Colonic mucosa (tissue), 4 donors: ENCODE measurements at regions of chr12 and their contacts with region 1.

Region 1: GRCh38 chr12:11581179-11581755 is 68.2 kb upstream of the ETV6 start:
- DNase-seq: peak; percentile 84
- H3K4me3 ChIP-seq: no peak overlapping the region
- H3K27ac ChIP-seq: no peak overlapping the region
- H3K4me1 ChIP-seq: no peaks in the 10 kb centered on the region
- H3K27me3 ChIP-seq: no peaks in the 10 kb centered on the region
- CTCF ChIP-seq: peak; percentile 54

Region 2: DNA sequence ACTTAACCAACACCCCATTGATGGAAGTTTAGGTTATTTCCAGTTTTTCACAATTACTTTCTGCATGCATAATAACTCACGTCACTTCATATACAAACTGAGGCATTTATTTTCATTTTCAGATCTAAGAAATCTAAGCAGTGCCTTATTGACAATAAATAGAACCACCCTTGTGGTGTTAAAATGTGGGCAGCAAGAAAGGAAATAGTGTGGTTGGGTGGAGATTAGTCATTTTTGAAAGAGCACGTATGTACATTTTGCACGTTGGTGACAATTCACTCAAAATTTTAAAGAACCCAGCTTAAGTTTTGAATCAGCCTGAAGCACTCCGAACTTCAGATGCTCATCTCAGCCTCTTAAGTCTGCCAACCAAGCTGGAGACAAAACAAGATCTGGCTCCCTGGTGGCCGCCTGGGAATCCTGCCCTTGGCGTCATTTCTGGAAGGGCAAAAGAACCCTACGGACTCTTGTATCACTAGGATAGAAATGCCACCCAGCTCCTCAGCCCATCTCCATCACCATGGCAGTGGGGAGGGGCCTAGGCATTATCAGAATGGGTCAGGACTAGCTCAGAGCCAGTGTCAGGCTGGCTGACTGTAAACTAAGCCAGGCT is 400.0 kb after region 1 on chr12:
- intact Hi-C with region 1: no loop called
- DNase-seq: no peak
- H3K4me3 ChIP-seq: no peak overlapping the region
- H3K27ac ChIP-seq: no peak overlapping the region
- H3K4me1 ChIP-seq: no peaks in the 10 kb centered on the region
- H3K27me3 ChIP-seq: no peaks in the 10 kb centered on the region
- CTCF ChIP-seq: no peak

Region 3: DNA sequence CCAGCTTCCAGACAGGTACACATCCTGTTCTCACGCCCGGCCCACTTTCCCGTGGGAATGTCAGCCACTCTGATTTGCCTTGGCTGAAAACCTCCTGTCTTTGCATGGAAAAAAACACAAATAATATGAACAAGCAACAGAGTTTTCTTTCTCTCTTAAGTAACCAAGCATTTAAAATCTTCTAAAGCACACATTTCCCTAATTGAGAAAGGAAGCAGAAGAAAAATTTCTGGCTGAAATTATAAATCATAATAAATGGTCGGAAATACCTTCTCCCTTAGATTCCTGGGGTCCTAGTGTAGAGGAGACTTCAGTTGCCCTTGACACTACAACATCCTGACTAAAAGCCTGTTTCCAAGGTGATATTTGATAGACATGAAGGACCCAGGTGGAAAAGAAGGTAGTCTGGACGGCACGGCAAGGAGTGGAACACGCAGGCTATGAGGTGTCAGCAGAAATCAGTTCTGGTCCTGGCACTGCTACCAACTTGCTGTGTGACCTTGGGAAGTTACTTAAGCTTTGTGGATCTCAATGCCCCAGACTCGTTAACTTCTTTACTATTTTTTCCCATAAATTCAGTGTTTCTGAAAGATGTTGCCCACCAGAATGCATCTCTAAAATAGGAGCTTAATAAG is 452.4 kb after region 1 on chr12:
- intact Hi-C with region 1: loop called (anchors 2 kb)
- DNase-seq: no peak
- H3K4me3 ChIP-seq: no peak overlapping the region
- H3K27ac ChIP-seq: no peak overlapping the region
- H3K4me1 ChIP-seq: no peaks in the 10 kb centered on the region
- H3K27me3 ChIP-seq: no peaks in the 10 kb centered on the region
- CTCF ChIP-seq: no peak

Region 4: GRCh38 chr12:12334367-12335040 is 753.2 kb after region 1 on chr12:
- intact Hi-C with region 1: loop called (anchors 10 kb)
- DNase-seq: peak; percentile 68
- H3K4me3 ChIP-seq: no peak overlapping the region
- H3K27ac ChIP-seq: no peak overlapping the region
- H3K4me1 ChIP-seq: peaks cover 9% of the 10 kb centered on the region
- H3K27me3 ChIP-seq: no peaks in the 10 kb centered on the region
- CTCF ChIP-seq: peak; percentile 94

Region 5: DNA sequence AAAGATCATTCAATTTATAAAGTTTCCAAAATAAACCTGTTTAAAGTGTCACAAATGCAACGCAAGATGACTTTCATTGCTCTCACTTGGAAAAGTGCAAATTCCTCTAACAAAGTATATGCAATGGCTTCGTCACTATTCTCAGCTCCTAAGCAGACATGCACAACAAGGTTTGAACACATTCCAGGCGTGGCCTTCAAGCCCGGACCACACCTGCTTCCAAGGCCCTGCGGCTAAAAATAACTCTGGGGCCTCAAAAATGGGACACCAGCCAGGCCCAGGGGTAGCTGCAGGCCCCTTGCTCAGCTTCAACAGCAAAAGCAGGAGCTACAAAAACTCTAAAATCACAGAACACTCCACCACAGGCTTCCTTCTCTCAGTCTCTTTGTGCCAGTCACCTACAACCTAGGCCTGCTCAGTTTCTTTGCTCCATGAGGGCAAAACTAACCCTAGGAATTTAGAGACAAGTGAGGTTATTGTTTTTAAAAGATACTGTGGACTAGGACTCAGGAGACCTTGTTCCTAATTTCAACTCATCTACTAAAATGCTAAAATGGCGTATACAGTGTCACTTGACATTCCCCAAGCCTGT is 952.1 kb after region 1 on chr12:
- intact Hi-C with region 1: no loop called
- DNase-seq: peak; percentile 75
- H3K4me3 ChIP-seq: no peak overlapping the region
- H3K27ac ChIP-seq: peak overlapping the region; percentile 38
- H3K4me1 ChIP-seq: peaks cover 12% of the 10 kb centered on the region
- H3K27me3 ChIP-seq: no peaks in the 10 kb centered on the region
- CTCF ChIP-seq: no peak